ENCODE measurements at regions of chr1 and their contacts with region 1.

Region 1: DNA sequence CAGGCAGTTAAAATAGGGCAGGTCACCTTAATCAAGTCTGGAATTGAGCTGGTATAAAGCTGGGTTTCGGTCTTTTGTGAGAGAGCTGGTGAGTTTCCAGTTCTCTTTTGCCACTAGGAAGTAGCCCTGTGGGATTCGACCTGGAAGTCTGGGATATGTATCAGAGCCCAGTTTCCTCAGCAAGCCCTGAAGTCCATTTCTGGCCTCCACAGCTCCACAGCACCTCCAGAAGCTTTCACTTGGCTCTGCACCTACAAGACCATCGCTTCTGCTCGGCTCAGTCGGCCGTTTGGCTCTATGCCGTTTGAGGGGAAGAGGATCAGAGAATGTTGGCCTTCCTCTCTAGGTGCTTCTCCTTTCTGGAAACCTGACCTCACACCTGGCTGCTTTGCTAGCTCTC is 148.0 kb downstream of the GALNT2 start:
- DNase-seq: peak in 4 of 5 donors; percentile 69 to 78 (median 71)
- ATAC-seq: peak; percentile 76 to 93 (median 92)
- H3K4me3 ChIP-seq: peak overlapping the region in 2 of 12 donors; percentile 1 to 11
- H3K27ac ChIP-seq: peak overlapping the region in 11 of 12 donors; percentile 4 to 66 (median 44)
- H3K4me1 ChIP-seq: peaks cover 3 to 58% (median 31%) of the 10 kb centered on the region in 12 donors
- H3K27me3 ChIP-seq: no peaks in the 10 kb centered on the region
- CTCF ChIP-seq: peak; percentile 43 to 82 (median 72)
- POLR2A ChIP-seq: no peak

Region 2: GRCh38 chr1:229836324-229836723 is 378.7 kb before region 1 on chr1:
- intact Hi-C with region 1: loop called in 3 of 10 experiments (anchors 5 to 10 kb)
- DNase-seq: no peak
- ATAC-seq: no peak
- H3K4me3 ChIP-seq: no peak overlapping the region
- H3K27ac ChIP-seq: no peak overlapping the region
- H3K4me1 ChIP-seq: no peaks in the 10 kb centered on the region
- H3K27me3 ChIP-seq: peaks cover 0 to 5% (median 0%) of the 10 kb centered on the region in 9 donors
- CTCF ChIP-seq: no peak
- POLR2A ChIP-seq: no peak

Region 3: GRCh38 chr1:229862017-229862774 is 352.8 kb before region 1 on chr1:
- intact Hi-C with region 1: loop called in 1 of 10 experiments (anchors 10 kb)
- DNase-seq: no peak
- ATAC-seq: no peak
- H3K4me3 ChIP-seq: no peak overlapping the region
- H3K27ac ChIP-seq: peak overlapping the region in 10 of 12 donors; percentile 20 to 90 (median 36)
- H3K4me1 ChIP-seq: peaks cover 0 to 46% (median 18%) of the 10 kb centered on the region in 12 donors
- H3K27me3 ChIP-seq: no peaks in the 10 kb centered on the region
- CTCF ChIP-seq: no peak
- POLR2A ChIP-seq: no peak

Region 4: DNA sequence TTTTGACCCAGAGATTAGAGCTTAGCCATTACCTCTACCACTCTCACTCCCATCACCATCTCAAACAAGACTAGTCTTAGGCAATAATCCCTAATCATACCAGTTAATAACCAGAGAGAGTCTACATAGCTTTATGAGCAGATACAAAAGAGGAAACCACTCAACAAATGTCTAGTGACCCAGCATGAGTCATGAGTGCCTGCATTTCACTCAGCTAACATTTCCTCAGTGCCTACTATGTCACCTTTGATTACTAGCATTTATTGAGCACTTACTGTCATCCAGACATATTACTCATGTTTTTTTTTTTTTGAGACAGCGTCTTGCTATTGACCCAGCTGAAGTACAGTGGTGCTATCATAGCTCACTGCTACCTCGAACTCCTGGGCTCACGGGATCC is 183.9 kb before region 1 on chr1:
- intact Hi-C with region 1: no loop called
- DNase-seq: no peak
- ATAC-seq: no peak
- H3K4me3 ChIP-seq: no peak overlapping the region
- H3K27ac ChIP-seq: no peak overlapping the region
- H3K4me1 ChIP-seq: no peaks in the 10 kb centered on the region
- H3K27me3 ChIP-seq: no peaks in the 10 kb centered on the region
- CTCF ChIP-seq: no peak
- POLR2A ChIP-seq: no peak

Region 5: GRCh38 chr1:230073371-230074035 is 141.5 kb before region 1 on chr1:
- intact Hi-C with region 1: loop called in 7 of 10 experiments (anchors 2 to 10 kb)
- DNase-seq: peak in 1 of 5 donors; percentile 69
- ATAC-seq: peak in 1 of 4 donors; percentile 28
- H3K4me3 ChIP-seq: no peak overlapping the region
- H3K27ac ChIP-seq: no peak overlapping the region
- H3K4me1 ChIP-seq: peaks cover 1 to 64% (median 36%) of the 10 kb centered on the region in 12 donors
- H3K27me3 ChIP-seq: no peaks in the 10 kb centered on the region
- CTCF ChIP-seq: no peak
- POLR2A ChIP-seq: no peak

Region 6: DNA sequence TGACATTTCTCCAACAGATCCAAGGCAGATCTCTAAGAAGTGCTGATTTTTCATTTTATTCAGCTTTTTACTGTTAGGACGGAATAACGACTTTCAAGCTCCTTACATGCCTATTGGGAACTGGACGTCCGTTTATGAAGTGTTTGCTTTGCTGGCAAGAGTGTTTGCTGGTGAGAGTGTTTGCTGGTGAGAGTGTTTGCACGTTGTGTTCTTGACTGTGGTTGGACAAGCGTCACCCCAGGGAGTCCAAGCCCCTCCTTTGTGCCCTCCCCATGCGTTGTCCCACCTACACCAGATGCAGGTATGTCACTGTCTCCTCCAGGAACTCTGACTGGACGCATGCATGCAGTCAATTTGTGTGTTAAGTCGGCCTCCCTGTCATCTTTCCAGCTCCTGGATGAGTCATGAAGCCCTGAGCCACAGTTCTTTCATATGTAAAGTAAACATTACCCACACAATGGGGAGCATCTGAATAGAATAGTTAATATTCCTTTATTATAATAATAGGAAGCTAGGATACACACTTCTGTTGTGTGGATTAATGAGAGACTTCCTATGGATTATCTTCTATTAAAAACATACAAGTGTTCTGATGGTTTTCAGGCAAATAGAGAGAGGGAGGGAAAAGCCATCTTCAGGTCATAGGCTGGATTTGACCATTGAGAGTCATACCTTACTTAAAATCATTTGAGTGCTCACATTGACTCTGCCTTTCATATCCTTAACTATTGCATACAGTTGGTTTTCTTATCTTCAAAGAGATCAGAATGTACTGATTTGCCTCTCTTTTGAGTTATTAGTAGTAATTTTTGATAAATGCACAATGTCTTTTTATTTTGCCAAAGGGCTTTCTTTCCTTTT is 28.8 kb before region 1 on chr1:
- intact Hi-C with region 1: no loop called
- DNase-seq: peak in 1 of 5 donors; percentile 41
- ATAC-seq: peak; percentile 21 to 77 (median 42)
- H3K4me3 ChIP-seq: no peak overlapping the region
- H3K27ac ChIP-seq: peak overlapping the region in 6 of 12 donors; percentile 7 to 41 (median 10)
- H3K4me1 ChIP-seq: peaks cover 0 to 41% (median 23%) of the 10 kb centered on the region in 12 donors
- H3K27me3 ChIP-seq: no peaks in the 10 kb centered on the region
- CTCF ChIP-seq: no peak
- POLR2A ChIP-seq: no peak

Region 7: DNA sequence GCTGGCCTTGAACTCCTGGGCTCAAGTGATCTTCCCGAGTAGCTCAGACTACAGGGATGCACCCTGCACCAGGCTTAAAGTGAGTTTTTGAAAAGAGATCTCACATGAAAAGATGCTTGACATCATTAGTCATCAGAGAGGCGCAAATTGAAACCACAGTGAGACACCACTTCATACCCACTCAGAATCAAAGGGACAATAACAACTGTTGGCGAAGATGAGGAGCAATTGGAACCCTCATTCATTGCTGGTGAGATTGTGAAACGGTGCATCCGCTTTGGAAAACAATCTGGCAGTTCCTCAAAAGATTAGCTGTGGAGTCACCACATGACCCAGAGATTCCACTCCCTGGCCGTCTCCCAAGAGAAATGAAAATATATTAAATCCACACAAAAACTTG is 88.8 kb after region 1 on chr1:
- intact Hi-C with region 1: loop called in 1 of 10 experiments (anchors 5 kb)
- DNase-seq: no peak
- ATAC-seq: peak in 1 of 4 donors; percentile 59
- H3K4me3 ChIP-seq: no peak overlapping the region
- H3K27ac ChIP-seq: no peak overlapping the region
- H3K4me1 ChIP-seq: peaks cover 0 to 24% (median 5%) of the 10 kb centered on the region in 12 donors
- H3K27me3 ChIP-seq: no peaks in the 10 kb centered on the region
- CTCF ChIP-seq: no peak
- POLR2A ChIP-seq: no peak

Measured in heart left ventricle (tissue), 16 donors.